ENCODE measurements at regions of chr14 and their contacts with region 1.

Region 1: GRCh38 chr14:64743062-64743461 is 38.8 kb downstream of the PLEKHG3 start:
- DNase-seq: no peak

Region 2: DNA sequence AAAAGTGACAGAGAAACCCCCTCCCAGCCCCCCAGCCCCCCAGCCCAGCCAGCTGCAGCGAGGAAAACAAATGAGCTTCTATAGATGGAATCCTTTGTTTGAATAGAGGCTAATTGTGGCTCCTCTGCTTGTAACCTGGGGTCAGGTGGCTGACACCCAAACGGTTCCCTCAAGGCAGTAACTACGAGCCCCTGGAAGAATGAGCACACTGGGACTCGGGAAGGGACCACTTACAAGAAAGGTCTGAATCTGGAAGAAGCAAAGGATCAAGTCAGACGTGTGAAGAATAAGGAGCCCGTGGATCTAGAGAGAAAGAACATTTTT is 560.8 kb after region 1 on chr14:
- intact Hi-C with region 1: no loop called
- DNase-seq: no peak

Region 3: GRCh38 chr14:65738339-65738738 is 995.3 kb after region 1 on chr14:
- intact Hi-C with region 1: loop called in 1 of 2 experiments (anchors 5 kb)
- DNase-seq: no peak

Measured in posterior vena cava (tissue), 2 donors.